Heart right ventricle (tissue), 16 donors: ENCODE measurements at regions of chr2 and their contacts with region 1.

Region 1: GRCh38 chr2:237744613-237745249 is 53.8 kb upstream of the RBM44 start:
- DNase-seq: peak; percentile 74 to 84
- ATAC-seq: peak; percentile 76 to 92 (median 84)
- H3K4me3 ChIP-seq: no peak overlapping the region
- H3K27ac ChIP-seq: peak overlapping the region in 5 of 10 donors; percentile 2 to 58 (median 41)
- H3K4me1 ChIP-seq: peaks cover 11 to 61% (median 54%) of the 10 kb centered on the region in 9 donors
- H3K27me3 ChIP-seq: no peaks in the 10 kb centered on the region
- CTCF ChIP-seq: peak; percentile 97 to 99 (median 99)

Region 2: DNA sequence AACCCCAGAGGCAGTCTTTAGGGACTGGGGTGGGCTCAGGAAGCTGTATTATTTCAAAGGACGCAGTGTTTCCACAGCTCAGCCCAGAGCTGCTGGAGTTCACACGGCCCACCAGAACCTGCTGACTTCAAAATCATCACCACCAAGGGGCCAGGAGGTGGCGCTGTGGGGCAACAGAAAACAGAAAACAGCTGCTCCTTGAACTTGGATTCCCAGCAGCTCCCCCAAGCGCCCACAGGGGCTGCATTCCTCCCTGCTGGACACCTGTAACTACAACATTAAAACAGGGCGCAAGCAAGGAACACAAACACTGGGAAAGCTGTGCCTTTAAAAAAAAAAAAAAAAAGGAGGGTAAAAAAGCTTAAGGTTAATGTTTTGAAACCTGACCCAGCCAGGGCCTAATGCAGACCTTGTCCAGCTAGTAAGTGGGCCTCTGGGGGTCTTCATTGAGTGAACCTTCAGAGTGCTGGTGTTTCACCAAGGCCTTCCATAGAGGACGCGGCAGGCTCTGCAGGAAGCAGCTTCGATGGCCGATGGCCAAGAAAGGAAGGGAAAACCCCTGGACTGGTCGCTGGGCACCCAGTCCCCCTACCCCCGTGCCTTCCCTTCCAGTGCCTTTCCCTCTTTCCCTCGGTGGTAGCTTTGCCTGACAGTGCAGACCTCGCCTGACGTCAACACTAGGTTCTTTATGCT is 231.8 kb before region 1 on chr2:
- intact Hi-C with region 1: loop called in 5 of 10 experiments (anchors 5 to 10 kb)
- DNase-seq: peak; percentile 85 to 88
- ATAC-seq: peak; percentile 62 to 86 (median 74)
- H3K4me3 ChIP-seq: no peak overlapping the region
- H3K27ac ChIP-seq: peak overlapping the region in 9 of 10 donors; percentile 57 to 87 (median 81)
- H3K4me1 ChIP-seq: peaks cover 5 to 61% (median 45%) of the 10 kb centered on the region in 9 donors
- H3K27me3 ChIP-seq: no peaks in the 10 kb centered on the region
- CTCF ChIP-seq: peak; percentile 86 to 98 (median 87)

Region 3: DNA sequence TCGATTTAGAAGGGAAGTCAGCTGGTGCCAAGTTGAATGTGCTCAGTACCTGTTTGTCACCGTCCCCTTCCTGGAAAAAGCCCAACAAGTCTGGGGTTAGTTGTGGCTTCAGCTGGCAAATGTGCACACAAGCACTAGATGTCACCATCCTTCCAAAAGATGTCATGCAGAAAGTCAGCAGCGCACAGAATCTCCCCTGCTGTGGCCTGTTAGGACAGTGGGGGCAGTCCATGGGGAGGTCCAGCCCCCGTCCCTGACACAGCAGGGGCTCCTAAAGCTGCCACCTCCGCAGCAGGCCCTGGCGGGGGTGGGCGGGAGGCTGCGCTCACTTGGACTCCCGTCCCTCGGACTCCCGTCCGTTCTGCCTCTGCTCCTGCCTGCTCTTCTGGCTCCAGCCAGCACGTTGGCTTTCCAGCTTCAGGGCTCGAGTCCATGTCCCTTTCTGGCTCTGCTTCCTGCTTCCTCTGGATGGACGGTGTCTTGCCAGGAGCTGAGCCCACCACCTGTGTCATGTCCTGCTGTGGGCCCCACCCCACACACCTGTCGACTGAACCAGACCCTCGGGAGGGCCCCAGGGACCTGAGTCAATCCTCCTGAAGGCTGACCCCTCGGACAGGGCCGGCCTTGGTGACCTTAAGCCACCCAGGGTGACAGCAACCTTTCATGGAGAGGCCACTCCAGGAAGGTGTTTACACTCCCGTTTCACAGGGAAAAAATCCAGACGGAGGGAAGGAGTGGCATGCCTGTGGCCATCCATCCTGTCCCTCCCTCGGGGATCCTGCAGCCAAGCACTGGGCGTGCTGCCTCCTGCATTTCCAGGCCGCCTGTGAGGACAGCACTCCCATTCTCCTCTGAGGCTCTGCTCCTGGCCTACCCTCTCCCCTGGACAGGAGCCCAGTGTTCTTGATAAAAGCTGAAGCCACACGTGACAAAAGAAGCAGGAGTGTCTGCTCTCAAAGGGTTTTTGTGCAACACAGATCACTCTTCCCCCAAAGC is 162.7 kb before region 1 on chr2:
- intact Hi-C with region 1: loop called in 9 of 10 experiments (anchors 1 to 5 kb)
- DNase-seq: peak; percentile 75 to 86
- ATAC-seq: peak; percentile 86 to 95 (median 90)
- H3K4me3 ChIP-seq: peak overlapping the region in 5 of 10 donors; percentile 1 to 44 (median 29)
- H3K27ac ChIP-seq: peak overlapping the region; percentile 72 to 92 (median 82)
- H3K4me1 ChIP-seq: peaks cover 0 to 30% (median 21%) of the 10 kb centered on the region in 9 donors
- H3K27me3 ChIP-seq: no peaks in the 10 kb centered on the region
- CTCF ChIP-seq: peak in 8 of 9 donors; percentile 31 to 85 (median 60)

Region 4: DNA sequence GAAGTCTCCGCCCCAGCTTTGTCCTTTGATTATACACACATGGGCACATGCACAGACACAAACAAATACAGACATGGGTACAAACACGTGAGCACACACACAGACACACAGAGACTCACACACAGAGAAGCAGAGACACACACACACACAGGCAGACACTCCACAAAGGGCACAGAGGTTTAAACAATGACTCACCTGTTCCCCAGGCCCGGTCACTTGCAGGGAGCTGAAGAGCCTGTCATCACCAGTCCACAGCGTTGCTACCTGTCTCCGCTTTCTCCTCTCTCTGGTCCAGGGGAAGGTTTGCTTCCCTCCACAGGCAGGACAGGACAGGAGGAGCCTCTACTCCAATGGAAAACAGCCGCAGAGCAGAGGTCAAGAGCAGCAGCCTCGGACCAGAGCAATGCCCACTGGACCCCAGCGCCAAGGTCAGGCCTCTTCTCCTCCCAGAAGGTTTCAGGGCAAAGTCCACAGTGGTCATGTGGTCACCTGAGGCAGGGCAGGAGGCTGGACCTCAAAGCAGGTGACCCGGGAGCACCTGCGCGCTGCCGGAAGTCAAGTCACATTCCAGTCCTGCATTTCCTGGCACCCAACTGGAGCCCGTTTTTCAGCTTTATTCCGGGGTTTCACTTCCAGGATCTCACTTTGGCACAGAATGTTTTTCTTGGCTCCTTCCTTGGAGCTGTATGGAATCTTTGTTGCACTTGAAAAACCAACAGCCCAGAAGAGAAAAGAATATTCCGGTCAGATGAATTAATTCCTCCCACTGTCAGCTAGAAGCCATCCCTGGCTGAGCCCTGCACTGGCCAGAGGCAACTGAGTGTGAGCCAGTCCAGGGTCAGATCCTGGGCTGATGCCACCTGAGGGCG is 154.2 kb before region 1 on chr2 and contains the start of gene RAB17:
- intact Hi-C with region 1: loop called in 2 of 10 experiments (anchors 5 kb)
- DNase-seq: no peak
- ATAC-seq: peak in 6 of 8 donors; percentile 38 to 74 (median 58)
- H3K4me3 ChIP-seq: peak within 1 kb of the TSS in 1 of 10 donors; percentile 4
- H3K27ac ChIP-seq: peak within 1 kb of the TSS in 4 of 10 donors; percentile 9 to 43 (median 40)
- H3K4me1 ChIP-seq: peaks cover 10 to 47% (median 26%) of the 10 kb centered on the region in 9 donors
- H3K27me3 ChIP-seq: no peaks in the 10 kb centered on the region
- CTCF ChIP-seq: no peak
- total RNA-seq, gene RAB17: 1.9 to 6.9 (median 4.6) TPM

Region 5: DNA sequence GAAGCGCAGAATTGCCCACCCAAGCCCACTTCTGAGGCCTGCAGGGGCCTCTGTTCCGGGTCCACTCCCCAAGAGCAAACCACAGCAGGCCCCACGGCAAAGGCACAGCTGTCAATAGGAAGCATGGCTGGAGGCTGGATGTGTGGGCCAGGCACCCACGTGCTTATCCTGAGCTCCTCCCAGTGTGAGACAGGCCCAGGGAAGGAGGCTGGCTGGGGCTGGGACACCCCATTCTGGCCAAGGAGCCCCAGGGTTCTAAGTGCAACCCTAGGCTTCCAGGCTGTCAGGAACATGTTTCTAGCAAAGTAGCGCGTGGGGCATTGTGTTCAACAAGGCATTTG is 148.2 kb before region 1 on chr2:
- intact Hi-C with region 1: loop called in 7 of 10 experiments (anchors 5 kb)
- DNase-seq: no peak
- ATAC-seq: no peak
- H3K4me3 ChIP-seq: no peak overlapping the region
- H3K27ac ChIP-seq: peak overlapping the region in 3 of 10 donors; percentile 25 to 79 (median 73)
- H3K4me1 ChIP-seq: peaks cover 7 to 47% (median 33%) of the 10 kb centered on the region in 9 donors
- H3K27me3 ChIP-seq: no peaks in the 10 kb centered on the region
- CTCF ChIP-seq: no peak

Region 6: DNA sequence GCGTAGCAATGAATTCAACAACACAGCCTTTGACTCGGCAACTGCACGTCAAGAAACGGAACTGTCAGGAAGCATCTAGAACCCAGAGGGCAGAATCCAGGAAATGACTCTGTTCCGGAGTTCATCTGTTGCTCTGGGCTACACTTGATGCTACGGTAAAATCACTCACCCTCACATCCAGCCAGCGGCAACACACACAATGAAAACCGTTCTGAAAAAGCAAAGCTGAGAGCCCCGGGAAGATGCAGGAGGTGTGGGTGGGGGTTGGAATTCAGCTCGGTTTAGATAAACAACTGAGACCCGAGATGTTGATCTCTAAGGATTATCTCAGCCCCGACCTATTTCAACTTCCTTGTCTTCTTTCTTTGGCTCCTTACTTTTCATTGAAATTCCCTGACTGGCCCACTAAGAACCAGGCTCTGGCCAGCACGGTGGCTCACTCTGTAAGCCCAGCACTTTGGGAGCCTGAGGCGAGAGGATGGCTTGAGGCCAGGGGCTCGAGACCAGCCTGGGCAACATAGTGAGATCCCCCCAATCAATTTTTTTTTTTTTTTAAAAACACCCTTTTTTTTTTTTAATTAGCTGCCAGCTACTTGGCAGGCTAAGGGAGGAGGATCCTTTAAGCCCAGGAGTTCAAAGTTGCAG is 140.9 kb before region 1 on chr2:
- intact Hi-C with region 1: loop called in 7 of 10 experiments (anchors 5 kb)
- DNase-seq: peak in 1 of 2 donors; percentile 64
- ATAC-seq: peak in 7 of 8 donors; percentile 34 to 81 (median 57)
- H3K4me3 ChIP-seq: no peak overlapping the region
- H3K27ac ChIP-seq: peak overlapping the region in 6 of 10 donors; percentile 9 to 62 (median 48)
- H3K4me1 ChIP-seq: peaks cover 6 to 50% (median 37%) of the 10 kb centered on the region in 9 donors
- H3K27me3 ChIP-seq: no peaks in the 10 kb centered on the region
- CTCF ChIP-seq: no peak

Region 7: DNA sequence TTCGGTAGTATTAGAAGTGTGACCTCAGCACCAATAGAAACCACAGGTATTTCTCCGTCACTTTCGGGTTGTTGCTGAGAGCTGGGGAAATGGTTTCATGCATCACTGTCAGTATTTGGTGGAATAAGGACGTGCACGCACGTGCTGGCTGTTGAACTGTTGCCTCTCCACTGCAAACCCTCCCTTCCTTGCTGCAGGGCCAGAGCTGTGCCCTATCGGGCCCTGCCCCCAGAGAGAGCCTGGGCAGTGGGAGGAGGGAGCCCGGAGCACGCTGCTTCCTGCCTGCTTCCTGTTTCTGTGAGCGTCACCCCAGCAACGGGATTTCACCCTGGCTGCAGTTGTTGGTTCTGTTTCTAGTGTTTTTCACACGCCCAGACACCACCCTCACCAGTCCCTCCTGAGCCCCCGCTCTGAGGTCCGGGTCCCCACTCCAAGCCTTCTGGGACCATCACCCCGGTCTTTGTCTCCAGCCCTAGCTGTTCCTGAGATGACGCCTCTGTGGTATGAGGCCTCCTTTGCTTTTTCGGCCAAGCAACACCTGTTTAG is 69.9 kb before region 1 on chr2:
- intact Hi-C with region 1: loop called (anchors 1 to 5 kb)
- DNase-seq: peak; percentile 83 to 92
- ATAC-seq: peak; percentile 83 to 89 (median 86)
- H3K4me3 ChIP-seq: peak overlapping the region in 6 of 10 donors; percentile 23 to 40 (median 28)
- H3K27ac ChIP-seq: peak overlapping the region; percentile 48 to 92 (median 84)
- H3K4me1 ChIP-seq: peaks cover 34 to 92% (median 87%) of the 10 kb centered on the region in 9 donors
- H3K27me3 ChIP-seq: no peaks in the 10 kb centered on the region
- CTCF ChIP-seq: peak in 4 of 9 donors; percentile 6 to 23 (median 16)

Region 8: DNA sequence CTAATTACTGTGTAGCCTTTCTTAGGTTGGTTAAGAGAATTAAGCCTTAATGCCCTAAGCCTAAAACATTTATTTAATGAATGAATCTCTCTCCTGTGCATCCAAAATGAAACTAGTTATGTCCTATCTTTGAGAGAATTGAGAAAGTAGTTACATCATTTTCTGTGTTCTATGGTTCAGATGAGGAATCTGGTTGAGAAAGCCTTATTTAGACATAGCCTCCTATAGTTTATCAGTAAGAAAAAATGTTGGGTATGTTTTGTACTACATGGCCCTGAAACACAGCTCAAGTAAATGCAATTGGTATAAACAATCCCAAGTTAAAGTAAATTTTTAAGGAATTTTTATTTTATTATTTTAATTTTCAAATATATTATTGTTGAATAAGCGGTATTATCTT is 88.8 kb after region 1 on chr2:
- intact Hi-C with region 1: no loop called
- DNase-seq: no peak
- ATAC-seq: no peak
- H3K4me3 ChIP-seq: no peak overlapping the region
- H3K27ac ChIP-seq: no peak overlapping the region
- H3K4me1 ChIP-seq: no peaks in the 10 kb centered on the region
- H3K27me3 ChIP-seq: no peaks in the 10 kb centered on the region
- CTCF ChIP-seq: no peak

Region 9: GRCh38 chr2:238139196-238140039 is 394.7 kb after region 1 on chr2:
- intact Hi-C with region 1: no loop called
- DNase-seq: no peak
- ATAC-seq: peak; percentile 25 to 68 (median 50)
- H3K4me3 ChIP-seq: peak overlapping the region; percentile 5 to 54 (median 40)
- H3K27ac ChIP-seq: peak overlapping the region; percentile 69 to 96 (median 89)
- H3K4me1 ChIP-seq: peaks cover 6 to 71% (median 51%) of the 10 kb centered on the region in 9 donors
- H3K27me3 ChIP-seq: peaks cover 0 to 2% (median 0%) of the 10 kb centered on the region in 7 donors
- CTCF ChIP-seq: peak; percentile 33 to 74 (median 64)